ENCODE measurements at regions of chr3 and their contacts with region 1.

Region 1: GRCh38 chr3:195909644-195910508 is 1.5 kb upstream of the TNK2 start:
- DNase-seq: peak; percentile 91
- ATAC-seq: peak; percentile 69
- H3K4me3 Mint-ChIP-seq: peak overlapping the region; percentile 64
- H3K27ac Mint-ChIP-seq: peak overlapping the region; percentile 74
- H3K4me1 Mint-ChIP-seq: peaks cover 31% of the 10 kb centered on the region
- H3K27me3 Mint-ChIP-seq: no peaks in the 10 kb centered on the region

Region 2: GRCh38 chr3:195777975-195778925 is 131.6 kb before region 1 on chr3:
- CTCF ChIA-PET with region 1: no interaction called
- DNase-seq: no peak
- ATAC-seq: no peak
- H3K4me3 Mint-ChIP-seq: no peak overlapping the region
- H3K27ac Mint-ChIP-seq: peak overlapping the region; percentile 67
- H3K4me1 Mint-ChIP-seq: peaks cover 42% of the 10 kb centered on the region
- H3K27me3 Mint-ChIP-seq: no peaks in the 10 kb centered on the region

Region 3: DNA sequence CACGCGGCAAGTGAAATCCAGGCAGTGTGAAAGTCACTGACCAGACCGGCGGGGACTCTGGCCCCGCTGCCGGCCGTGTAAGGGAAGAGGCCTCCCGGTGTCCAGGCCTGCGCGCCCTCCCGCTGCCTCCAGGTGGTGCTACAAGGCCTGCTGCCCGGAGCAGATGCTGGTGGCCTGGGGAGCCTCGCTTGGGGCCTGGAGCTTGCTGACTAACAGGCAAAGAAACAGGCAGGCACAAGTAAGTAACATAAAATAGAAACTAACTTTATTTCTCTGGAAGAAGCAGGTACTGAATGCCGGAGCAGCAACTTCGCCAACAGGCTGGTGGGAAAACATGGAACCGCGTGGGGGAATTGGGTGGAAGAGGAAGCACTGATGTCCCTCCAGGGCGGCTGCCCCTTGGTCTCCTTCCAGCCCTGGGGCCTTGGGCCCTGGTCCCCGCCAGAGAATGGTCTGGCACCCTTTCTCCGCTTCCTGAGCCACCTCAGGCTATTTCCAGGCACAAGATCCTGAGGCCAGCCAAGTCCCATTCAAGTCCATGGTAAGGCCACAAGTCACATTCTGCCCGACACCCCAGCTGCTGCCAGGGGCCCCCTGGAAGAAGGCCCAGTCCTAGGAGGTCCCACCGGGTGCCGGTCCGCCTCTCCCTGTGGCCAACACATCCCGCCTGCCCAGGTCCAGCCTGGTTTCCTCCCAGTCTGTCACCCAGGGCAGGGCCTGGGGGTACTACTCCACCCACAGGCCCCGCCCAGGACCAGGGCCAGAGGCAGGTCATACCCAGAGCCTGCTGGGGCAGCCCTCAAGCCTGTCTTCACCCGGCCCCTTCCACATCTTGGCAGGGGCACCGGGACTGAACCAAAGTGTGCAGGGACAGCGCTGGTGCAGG is 46.5 kb before region 1 on chr3:
- CTCF ChIA-PET with region 1: interaction called, 82 read pairs
- DNase-seq: peak; percentile 72
- ATAC-seq: peak; percentile 72
- H3K4me3 Mint-ChIP-seq: no peak overlapping the region
- H3K27ac Mint-ChIP-seq: no peak overlapping the region
- H3K4me1 Mint-ChIP-seq: peaks cover 4% of the 10 kb centered on the region
- H3K27me3 Mint-ChIP-seq: no peaks in the 10 kb centered on the region

Region 4: DNA sequence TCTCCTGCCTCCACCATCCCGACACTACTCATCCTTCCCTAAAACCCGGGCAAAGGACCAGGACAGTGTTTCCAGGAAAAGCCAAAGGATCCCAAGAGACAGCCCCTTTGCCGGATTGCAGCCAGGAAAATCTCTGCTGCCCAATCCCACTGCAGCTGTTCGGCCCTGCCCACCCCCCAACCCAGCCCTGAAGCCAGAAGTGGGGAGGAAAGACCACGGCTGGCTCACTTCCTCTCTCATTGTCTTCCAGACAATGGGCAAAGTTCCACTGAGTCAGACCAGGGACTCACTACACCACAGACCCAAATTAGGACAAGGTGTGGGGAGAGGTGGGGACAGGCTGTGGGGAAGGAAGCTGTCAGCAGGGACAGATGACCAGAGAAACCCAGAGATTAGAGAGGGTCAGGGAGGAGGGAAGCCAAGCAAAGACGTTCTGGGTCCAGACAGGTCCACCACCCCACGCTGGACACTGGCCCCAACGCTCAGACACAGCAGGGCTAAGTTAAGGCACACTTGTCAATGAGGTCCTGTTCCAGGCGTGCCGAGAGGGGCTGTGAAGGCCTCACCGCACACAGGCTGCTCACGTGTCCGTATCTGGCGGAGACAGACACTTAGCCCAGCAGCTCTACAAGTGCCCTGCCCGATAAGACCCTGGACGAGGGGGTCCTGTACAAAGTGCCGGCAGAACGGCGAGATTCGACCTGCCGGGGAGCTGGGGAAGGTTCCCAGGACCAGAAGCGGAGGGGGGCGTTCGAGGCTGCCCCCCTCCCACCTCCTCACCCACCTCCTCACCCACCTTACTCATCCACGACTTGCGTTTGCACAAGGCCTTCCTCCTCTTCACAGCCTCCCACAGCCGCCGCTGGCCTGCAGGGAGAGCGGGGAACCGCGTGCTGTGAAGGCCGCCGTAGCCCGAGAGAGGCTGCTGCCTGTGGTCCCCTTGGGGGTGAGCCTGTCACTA is 23.4 kb before region 1 on chr3:
- CTCF ChIA-PET with region 1: interaction called, 129 read pairs
- DNase-seq: no peak
- ATAC-seq: no peak
- H3K4me3 Mint-ChIP-seq: no peak overlapping the region
- H3K27ac Mint-ChIP-seq: no peak overlapping the region
- H3K4me1 Mint-ChIP-seq: peaks cover 4% of the 10 kb centered on the region
- H3K27me3 Mint-ChIP-seq: no peaks in the 10 kb centered on the region

Region 5: DNA sequence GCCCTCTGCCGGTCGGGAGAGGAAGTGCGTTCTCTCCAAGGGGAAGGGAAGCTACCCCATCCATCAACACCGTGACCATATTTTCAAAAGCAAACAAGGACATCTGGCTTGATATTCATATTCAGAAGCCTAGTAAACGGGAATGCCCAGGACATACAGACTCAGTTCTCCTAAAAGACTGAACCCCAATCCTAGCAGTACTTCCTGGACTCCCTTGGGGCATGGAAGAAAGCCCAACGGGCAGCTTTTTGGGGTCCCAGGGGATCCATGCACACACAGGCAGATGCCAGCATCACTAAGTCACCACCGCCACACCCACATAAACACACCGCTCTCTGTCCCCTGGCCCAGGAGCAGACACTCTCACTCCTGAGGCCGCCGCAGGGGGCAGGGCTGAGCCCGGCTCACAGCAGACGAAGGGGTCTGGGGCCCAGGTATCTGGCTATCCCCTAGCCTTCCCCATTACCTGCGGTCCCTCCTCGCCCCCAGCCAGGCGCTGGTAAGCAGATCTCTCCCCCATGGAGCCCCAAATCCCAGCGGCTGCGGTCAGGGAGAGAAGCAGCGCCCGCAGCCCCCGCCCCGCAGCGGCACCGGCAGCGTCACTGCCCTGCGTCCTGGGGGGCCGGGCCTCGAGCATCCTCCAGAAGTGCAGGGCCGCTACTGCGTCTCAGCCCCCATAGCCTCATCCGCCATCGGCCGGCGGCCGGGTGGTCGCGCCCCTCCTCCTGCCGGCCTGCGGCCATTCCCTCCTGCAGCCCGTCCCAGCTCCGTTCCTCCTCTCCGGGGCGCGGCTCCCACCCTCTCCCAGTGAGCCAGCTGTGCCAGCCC is 14.9 kb before region 1 on chr3:
- CTCF ChIA-PET with region 1: interaction called, 131 read pairs
- DNase-seq: peak; percentile 82
- ATAC-seq: peak; percentile 77
- H3K4me3 Mint-ChIP-seq: peak overlapping the region; percentile 81
- H3K27ac Mint-ChIP-seq: peak overlapping the region; percentile 87
- H3K4me1 Mint-ChIP-seq: peaks cover 40% of the 10 kb centered on the region
- H3K27me3 Mint-ChIP-seq: no peaks in the 10 kb centered on the region

Measured in activated CD8-positive, alpha-beta memory T cell treated with anti-CD3 and anti-CD28 coated beads, Interleukin-2, amount 10 ng/mL, durations not matched to agents 7 days and 5 days (primary cell).